ENCODE measurements at regions of chr1 and their contacts with region 1.

Region 1: GRCh38 chr1:22416555-22417454 is 34.8 kb upstream of the ZBTB40 start:
- DNase-seq: peak; percentile 81
- H3K4me3 Mint-ChIP-seq: no peak overlapping the region
- H3K27ac Mint-ChIP-seq: no peak overlapping the region
- H3K4me1 Mint-ChIP-seq: peaks cover 24% of the 10 kb centered on the region
- H3K27me3 Mint-ChIP-seq: peaks cover 30% of the 10 kb centered on the region
- CTCF ChIP-seq: peak; percentile 93

Region 2: DNA sequence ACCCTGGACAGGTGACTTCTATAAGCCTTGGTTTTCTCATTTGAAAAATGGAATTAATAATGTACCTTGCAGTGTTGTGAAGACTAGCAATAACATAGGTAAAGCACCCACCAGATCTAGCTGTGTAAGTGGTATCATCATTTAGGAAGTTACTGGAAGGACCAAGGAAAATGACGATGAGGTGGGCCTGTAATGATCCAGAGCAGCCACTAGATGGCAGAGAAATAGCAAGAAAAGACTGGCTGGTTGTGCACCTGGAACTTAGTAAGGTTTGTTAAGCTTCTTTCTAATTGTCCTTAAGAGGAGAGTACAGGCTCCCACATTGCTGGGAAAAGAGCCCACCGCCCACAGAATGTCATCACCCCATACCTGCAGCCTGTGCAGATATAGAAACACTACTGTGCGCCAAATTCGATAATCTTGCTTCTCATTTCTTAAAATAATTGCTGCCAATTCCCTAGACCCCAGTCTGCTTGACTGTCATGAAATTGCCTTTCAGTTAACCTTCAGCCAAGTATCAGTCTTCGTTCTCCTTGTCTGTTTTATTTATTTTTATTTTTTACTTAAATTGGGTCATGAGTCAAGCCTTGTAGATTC is 311.1 kb before region 1 on chr1:
- CTCF ChIA-PET with region 1: interaction called, 8 read pairs
- intact Hi-C with region 1: loop called (anchors 10 kb)
- DNase-seq: peak; percentile 12
- H3K4me3 Mint-ChIP-seq: no peak overlapping the region
- H3K27ac Mint-ChIP-seq: no peak overlapping the region
- H3K4me1 Mint-ChIP-seq: no peaks in the 10 kb centered on the region
- H3K27me3 Mint-ChIP-seq: no peaks in the 10 kb centered on the region
- CTCF ChIP-seq: peak; percentile 54

Region 3: DNA sequence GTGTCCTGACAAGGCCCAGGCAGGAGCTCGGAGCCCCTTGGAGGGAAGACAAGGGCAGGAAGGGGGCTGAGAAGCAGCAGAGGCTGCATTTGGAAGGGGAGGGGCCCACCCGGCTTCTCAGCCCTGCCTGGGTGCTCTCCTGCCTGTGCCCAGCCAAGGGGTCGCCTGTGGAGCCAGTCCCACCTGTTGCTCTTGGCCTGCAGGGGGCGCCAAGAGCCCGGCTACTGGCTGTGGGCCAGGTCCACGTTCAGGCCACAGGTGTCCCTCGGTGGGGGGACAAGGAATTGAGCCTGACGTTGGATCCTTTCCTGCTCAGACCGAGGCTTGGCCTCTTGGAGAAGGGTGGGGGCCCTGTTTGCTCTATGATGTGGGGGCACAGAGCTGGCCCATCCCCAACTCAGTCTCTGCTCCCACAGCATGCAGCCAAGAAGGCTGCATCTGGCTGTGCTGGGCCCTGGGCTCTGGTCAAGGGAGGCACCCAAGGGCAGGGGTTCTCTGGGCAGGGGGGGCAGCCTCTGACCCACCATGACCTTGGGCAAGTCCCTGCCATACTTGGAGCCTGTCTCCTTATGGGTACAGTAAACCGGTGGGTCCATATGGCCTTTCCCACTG is 284.8 kb before region 1 on chr1:
- CTCF ChIA-PET with region 1: interaction called, 8 read pairs
- intact Hi-C with region 1: loop called (anchors 2 kb)
- DNase-seq: peak; percentile 77
- H3K4me3 Mint-ChIP-seq: no peak overlapping the region
- H3K27ac Mint-ChIP-seq: no peak overlapping the region
- H3K4me1 Mint-ChIP-seq: no peaks in the 10 kb centered on the region
- H3K27me3 Mint-ChIP-seq: no peaks in the 10 kb centered on the region
- CTCF ChIP-seq: peak; percentile 79

Region 4: DNA sequence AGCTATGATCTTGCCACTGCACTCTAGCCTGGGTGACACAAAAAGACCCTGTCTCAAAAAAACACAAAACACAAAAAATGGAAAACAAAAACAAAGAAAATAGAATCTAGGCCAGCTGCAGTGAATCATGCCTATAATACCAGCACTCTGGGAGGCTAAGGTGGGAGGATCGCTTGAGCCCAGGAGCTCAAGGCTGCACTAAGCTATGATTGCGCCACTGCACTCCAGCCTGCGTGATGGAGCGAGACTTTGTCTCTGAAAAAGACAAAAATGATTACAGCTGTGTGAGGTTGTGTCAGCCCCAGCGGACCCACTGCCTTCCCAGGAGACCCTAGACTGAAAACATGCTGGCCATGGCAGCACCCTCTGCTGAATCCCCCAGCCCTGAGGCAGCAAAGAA is 45.4 kb before region 1 on chr1:
- CTCF ChIA-PET with region 1: no interaction called
- intact Hi-C with region 1: no loop called
- DNase-seq: no peak
- H3K4me3 Mint-ChIP-seq: no peak overlapping the region
- H3K27ac Mint-ChIP-seq: no peak overlapping the region
- H3K4me1 Mint-ChIP-seq: no peaks in the 10 kb centered on the region
- H3K27me3 Mint-ChIP-seq: peaks cover 95% of the 10 kb centered on the region
- CTCF ChIP-seq: no peak

Region 5: GRCh38 chr1:22398656-22399420 is 18.0 kb before region 1 on chr1:
- CTCF ChIA-PET with region 1: no interaction called
- intact Hi-C with region 1: no loop called
- DNase-seq: no peak
- H3K4me3 Mint-ChIP-seq: no peak overlapping the region
- H3K27ac Mint-ChIP-seq: no peak overlapping the region
- H3K4me1 Mint-ChIP-seq: peaks cover 5% of the 10 kb centered on the region
- H3K27me3 Mint-ChIP-seq: peaks cover 73% of the 10 kb centered on the region
- CTCF ChIP-seq: no peak

Region 6: GRCh38 chr1:22518379-22518778 is 101.6 kb after region 1 on chr1:
- CTCF ChIA-PET with region 1: no interaction called
- intact Hi-C with region 1: no loop called
- DNase-seq: no peak
- H3K4me3 Mint-ChIP-seq: no peak overlapping the region
- H3K27ac Mint-ChIP-seq: no peak overlapping the region
- H3K4me1 Mint-ChIP-seq: no peaks in the 10 kb centered on the region
- H3K27me3 Mint-ChIP-seq: no peaks in the 10 kb centered on the region
- CTCF ChIP-seq: no peak

Region 7: GRCh38 chr1:22641906-22642636 is 225.3 kb after region 1 on chr1:
- CTCF ChIA-PET with region 1: interaction called, 11 read pairs
- intact Hi-C with region 1: loop called (anchors 1 kb)
- DNase-seq: peak; percentile 82
- H3K4me3 Mint-ChIP-seq: no peak overlapping the region
- H3K27ac Mint-ChIP-seq: no peak overlapping the region
- H3K4me1 Mint-ChIP-seq: no peaks in the 10 kb centered on the region
- H3K27me3 Mint-ChIP-seq: peaks cover 29% of the 10 kb centered on the region
- CTCF ChIP-seq: peak; percentile 76

Measured in Calu3 (cell line).